Dendritic cell treated with granulocyte-macrophage colony-stimulating factor and Interleukin-4, amounts not matched to agents 40 ng/mL and 50 ng/mL, for 4 days (primary cell): ENCODE measurements at regions of chr2 and their contacts with region 1.

Region 1: GRCh38 chr2:177263451-177264208 is 897 bp downstream of the NFE2L2 start:
- H3K4me3 Mint-ChIP-seq: peak overlapping the region; percentile 88
- H3K27ac Mint-ChIP-seq: peak overlapping the region; percentile 100
- H3K4me1 Mint-ChIP-seq: peaks cover 19% of the 10 kb centered on the region
- H3K27me3 Mint-ChIP-seq: no peaks in the 10 kb centered on the region

Region 2: DNA sequence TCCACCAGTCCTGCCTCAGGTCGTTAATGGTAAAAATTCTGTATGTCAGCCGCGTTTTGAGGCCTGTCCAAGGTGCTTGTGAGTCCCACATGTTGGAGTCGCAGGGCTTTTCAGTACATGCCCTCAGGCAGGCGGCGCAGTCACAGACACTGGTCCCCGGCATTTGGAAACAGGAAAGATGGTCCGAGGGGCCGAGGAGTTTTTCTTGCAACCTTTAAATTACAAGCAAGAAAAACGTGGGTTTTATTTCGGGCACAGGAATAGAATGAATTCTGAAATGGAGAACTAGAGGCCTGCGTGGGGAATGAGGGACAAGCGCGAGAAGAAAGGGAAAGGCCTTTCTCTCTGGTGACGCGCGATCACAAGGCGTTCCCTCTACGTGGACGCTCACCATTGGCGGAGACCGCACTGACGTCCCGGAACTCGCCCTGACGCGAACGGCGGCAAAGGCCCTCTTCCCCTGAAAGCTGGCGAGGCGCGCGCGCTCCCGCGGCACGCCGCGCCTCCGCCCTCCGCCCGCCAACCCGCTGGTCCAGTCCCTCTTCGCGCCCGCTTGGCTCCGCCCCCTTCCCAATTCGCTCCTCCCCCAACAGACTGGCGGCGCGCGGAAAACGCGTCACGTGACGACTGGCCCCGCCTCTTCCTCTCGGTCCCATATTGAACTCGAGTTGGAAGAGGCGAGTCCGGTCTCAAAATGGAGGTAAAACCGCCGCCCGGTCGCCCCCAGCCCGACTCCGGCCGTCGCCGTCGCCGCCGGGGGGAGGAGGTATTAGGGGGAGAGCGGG is 51.3 kb before region 1 on chr2 and contains the start of gene HNRNPA3:
- intact Hi-C with region 1: loop called (anchors 1 kb)
- H3K4me3 Mint-ChIP-seq: peak within 1 kb of the TSS; percentile 85
- H3K27ac Mint-ChIP-seq: peak within 1 kb of the TSS; percentile 99
- H3K4me1 Mint-ChIP-seq: peaks cover 27% of the 10 kb centered on the region
- H3K27me3 Mint-ChIP-seq: no peaks in the 10 kb centered on the region

Region 3: DNA sequence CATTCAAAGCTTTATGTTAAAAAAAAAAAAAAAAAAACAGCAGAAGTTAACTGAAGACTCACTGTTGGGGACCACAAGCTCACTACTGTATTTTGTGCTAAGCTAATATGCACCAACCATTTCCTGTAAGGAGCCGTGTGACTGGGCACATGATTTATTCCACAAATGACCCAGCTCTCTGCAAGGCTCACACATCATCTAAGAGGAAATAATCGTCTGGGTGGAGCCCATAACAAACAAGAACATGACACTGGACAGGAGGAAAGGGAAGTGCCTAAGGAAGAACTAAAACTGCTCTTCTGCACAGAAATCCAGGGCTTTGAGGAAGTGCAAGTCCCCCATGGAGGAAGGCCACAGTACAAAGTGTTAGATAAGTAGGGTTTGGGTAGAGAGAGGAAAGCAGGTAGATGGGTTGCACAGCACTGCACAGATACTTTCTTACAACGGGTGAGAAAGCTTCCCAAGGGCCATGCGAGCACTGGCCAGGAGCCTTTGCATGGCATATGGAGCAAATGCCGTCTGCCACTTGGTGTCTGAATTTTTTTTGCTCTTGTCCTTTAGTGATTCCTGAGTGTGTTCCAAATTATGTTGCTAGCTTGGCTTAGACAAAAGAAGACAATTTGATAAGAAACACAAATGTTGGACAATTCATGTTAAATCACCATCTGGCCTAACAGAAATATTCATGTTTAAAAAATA is 23.5 kb before region 1 on chr2:
- intact Hi-C with region 1: loop called (anchors 1 kb)
- H3K4me3 Mint-ChIP-seq: peak overlapping the region; percentile 37
- H3K27ac Mint-ChIP-seq: peak overlapping the region; percentile 93
- H3K4me1 Mint-ChIP-seq: peaks cover 72% of the 10 kb centered on the region
- H3K27me3 Mint-ChIP-seq: no peaks in the 10 kb centered on the region

Region 4: GRCh38 chr2:177296040-177296439 is 32.4 kb after region 1 on chr2:
- intact Hi-C with region 1: loop called (anchors 2 kb)
- H3K4me3 Mint-ChIP-seq: no peak overlapping the region
- H3K27ac Mint-ChIP-seq: no peak overlapping the region
- H3K4me1 Mint-ChIP-seq: peaks cover under 1% of the 10 kb centered on the region
- H3K27me3 Mint-ChIP-seq: no peaks in the 10 kb centered on the region

Region 5: GRCh38 chr2:177314194-177314593 is 50.6 kb after region 1 on chr2:
- intact Hi-C with region 1: no loop called
- H3K4me3 Mint-ChIP-seq: no peak overlapping the region
- H3K27ac Mint-ChIP-seq: no peak overlapping the region
- H3K4me1 Mint-ChIP-seq: peaks cover 6% of the 10 kb centered on the region
- H3K27me3 Mint-ChIP-seq: no peaks in the 10 kb centered on the region

Region 6: DNA sequence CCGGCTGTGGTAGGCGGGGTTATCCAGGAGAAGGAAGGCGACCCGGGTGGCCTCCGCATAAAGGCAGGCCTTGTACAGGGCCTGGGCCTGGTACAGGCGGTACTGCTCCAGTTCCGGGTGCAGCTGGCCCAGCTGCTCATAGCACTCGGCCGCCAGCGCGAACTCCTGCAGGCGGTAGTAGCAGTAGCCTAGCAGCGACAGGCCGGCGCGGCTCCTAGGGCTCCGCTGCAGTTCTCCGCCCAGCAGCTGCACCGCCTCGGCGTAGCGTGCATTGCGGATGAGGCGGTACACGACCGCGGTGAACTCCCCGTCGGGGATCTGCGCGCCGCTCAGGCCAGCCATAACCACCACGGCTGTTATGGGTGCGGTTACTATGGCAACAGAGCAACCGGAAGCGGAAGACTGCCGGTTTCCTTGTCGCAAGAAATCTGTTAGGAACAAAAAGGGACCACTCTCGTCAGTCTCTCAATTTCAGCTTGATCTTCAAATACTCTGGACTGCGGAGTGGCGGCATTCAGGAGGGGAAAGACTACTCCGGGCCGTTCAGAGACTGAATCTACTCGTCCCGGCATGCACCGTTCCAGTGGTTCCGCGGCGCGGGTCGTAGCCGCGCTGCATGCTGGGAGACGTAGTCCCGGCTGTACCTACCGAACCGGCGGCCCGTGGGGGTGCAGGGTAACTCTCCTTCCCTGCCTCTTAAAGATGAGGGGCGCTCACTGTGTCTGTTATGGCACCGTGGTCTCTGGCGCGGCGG is 289.0 kb after region 1 on chr2:
- intact Hi-C with region 1: loop called (anchors 10 kb)
- H3K4me3 Mint-ChIP-seq: peak overlapping the region; percentile 87
- H3K27ac Mint-ChIP-seq: peak overlapping the region; percentile 99
- H3K4me1 Mint-ChIP-seq: peaks cover 10% of the 10 kb centered on the region
- H3K27me3 Mint-ChIP-seq: no peaks in the 10 kb centered on the region